Adrenal gland (tissue), 19 donors: ENCODE measurements at regions of chr17 and their contacts with region 1.

Region 1: DNA sequence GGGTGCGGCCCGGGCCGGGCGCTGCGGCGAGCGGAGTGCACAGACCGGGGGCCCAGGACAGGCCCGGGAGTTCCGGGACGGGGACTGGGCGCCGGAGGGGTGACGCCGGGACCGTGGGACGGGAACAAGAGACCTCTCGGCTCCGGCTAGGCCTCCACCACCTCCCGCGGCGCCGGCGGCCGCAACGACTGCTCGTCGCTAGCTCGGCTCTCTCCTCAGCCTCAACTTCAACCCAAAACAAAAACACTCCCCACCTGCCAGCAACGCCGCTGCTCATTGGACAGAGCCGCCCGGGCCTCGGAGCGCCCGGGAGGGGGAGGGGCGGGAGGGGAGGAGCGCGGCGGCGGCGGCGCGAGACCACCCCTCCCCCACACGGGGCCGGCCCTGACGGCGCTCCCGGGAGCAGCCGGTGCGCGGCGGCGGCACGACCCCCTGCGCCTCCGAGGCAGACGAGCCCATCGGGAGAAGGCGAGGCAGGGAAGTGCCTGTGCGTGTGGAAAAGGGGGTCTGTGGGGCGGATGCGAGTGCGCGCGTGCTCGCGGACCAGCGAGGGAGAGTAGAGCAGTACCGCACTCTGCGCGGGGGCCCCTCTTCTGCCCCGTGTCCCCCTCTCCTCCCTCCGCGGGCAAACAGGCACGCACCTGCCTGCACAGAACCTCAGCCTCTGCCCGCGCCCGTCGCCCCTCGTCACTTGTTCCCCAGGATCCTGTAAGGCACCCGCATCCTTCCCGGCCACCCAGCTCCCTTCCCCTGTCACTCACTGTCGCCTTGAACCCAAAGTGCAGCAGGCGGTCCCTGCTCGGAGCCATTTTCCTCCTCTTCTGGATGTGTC is at the start of gene FBXL20:
- DNase-seq: peak; percentile 93 to 98 (median 96)
- H3K4me3 ChIP-seq: peak within 1 kb of the TSS; percentile 88 to 98 (median 93)
- H3K27ac ChIP-seq: peak within 1 kb of the TSS; percentile 48 to 95 (median 89)
- H3K4me1 ChIP-seq: peaks cover 8 to 38% of the 10 kb centered on the region in 2 donors
- H3K27me3 ChIP-seq: no peaks in the 10 kb centered on the region
- CTCF ChIP-seq: peak in 1 of 6 experiments; percentile 22
- POLR2A ChIP-seq: peak; percentile 66 to 95
- total RNA-seq, gene FBXL20: 11.5 to 41.5 (median 21.6) TPM

Region 2: DNA sequence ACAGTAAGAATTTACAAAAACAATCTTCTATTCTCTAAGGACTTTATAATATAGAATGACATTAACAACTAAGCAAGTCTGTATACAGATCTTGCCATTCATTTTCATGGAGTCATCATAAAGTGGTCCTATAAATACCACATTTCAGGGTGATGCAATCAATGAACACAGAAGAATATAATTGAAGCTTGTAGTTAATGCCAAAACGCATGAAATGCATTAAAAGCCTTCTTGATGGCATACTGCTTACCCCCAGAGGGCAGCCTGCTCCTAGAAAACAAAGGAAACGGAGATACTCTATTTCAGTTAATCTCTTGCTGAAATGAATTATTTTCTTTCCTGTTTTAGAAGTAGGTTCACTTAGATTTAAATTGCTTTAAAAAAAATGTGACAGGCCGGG is 130.7 kb before region 1 on chr17:
- intact Hi-C with region 1: loop called (anchors 10 kb)
- DNase-seq: peak in 1 of 7 donors; percentile 10
- H3K4me3 ChIP-seq: no peak overlapping the region
- H3K27ac ChIP-seq: no peak overlapping the region
- H3K4me1 ChIP-seq: no peaks in the 10 kb centered on the region
- H3K27me3 ChIP-seq: no peaks in the 10 kb centered on the region
- CTCF ChIP-seq: peak; percentile 8 to 36 (median 19)
- POLR2A ChIP-seq: no peak

Region 3: GRCh38 chr17:39416141-39416540 is 14.5 kb after region 1 on chr17:
- intact Hi-C with region 1: no loop called
- DNase-seq: no peak
- H3K4me3 ChIP-seq: no peak overlapping the region
- H3K27ac ChIP-seq: no peak overlapping the region
- H3K4me1 ChIP-seq: no peaks in the 10 kb centered on the region
- H3K27me3 ChIP-seq: no peaks in the 10 kb centered on the region
- CTCF ChIP-seq: no peak
- POLR2A ChIP-seq: no peak

Region 4: GRCh38 chr17:39547713-39548478 is 146.3 kb after region 1 on chr17:
- intact Hi-C with region 1: no loop called
- DNase-seq: peak in 6 of 7 donors; percentile 53 to 89 (median 73)
- H3K4me3 ChIP-seq: no peak overlapping the region
- H3K27ac ChIP-seq: no peak overlapping the region
- H3K4me1 ChIP-seq: no peaks in the 10 kb centered on the region
- H3K27me3 ChIP-seq: no peaks in the 10 kb centered on the region
- CTCF ChIP-seq: peak; percentile 87 to 96 (median 90)
- POLR2A ChIP-seq: no peak